Motor neuron (in vitro differentiated cells): ENCODE measurements at regions of chr6 and their contacts with region 1.

Region 1: DNA sequence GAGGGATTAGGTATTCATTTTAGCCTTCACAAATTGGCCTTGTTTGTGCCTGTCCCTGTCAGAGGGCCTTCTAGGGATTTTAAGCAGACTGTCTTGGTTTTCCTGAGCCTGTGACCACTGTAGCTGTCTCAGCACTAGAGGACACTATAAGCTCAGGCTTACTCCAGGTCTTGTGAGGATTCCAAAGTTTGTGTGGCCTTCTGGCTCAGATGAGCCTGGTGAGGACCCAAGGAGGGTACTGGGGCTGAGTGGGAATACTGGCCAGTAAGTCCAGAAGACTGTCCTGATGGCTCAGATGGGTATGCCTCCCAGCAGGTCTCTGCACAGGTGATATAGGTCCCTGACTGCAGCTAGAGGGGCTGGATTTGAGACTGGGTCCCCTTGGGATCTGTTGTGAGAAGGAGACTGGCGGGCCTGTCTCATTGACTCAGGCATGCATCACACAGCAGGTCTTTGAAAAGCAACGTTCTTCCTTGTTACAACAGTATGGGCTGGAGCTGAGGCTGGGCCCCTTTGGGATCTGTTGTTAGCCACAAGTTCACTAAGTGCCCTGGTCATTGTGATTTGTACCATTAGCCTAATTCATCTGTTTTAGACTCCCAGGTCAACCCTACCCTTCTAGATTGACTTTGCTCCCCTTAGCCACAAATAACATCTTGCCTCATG is 26.3 kb upstream of the TFB1M start:
- ATAC-seq: peak in 3 of 8 experiments; percentile 40 to 48 (median 47)
- H3K4me3 ChIP-seq: no peak overlapping the region
- H3K27ac ChIP-seq: no peak overlapping the region
- H3K4me1 ChIP-seq: no peaks in the 10 kb centered on the region

Region 2: GRCh38 chr6:155493694-155494143 is 153.1 kb after region 1 on chr6:
- in situ Hi-C with region 1: loop called in 4 of 9 experiments (anchors 10 to 25 kb)
- ATAC-seq: peak in 4 of 8 experiments; percentile 40 to 99 (median 98)
- H3K4me3 ChIP-seq: no peak overlapping the region
- H3K27ac ChIP-seq: no peak overlapping the region
- H3K4me1 ChIP-seq: peaks cover 0 to 4% of the 10 kb centered on the region in 2 donors